Esophagus squamous epithelium (tissue), 5 donors: ENCODE measurements at regions of chr1 and their contacts with region 1.

Region 1: DNA sequence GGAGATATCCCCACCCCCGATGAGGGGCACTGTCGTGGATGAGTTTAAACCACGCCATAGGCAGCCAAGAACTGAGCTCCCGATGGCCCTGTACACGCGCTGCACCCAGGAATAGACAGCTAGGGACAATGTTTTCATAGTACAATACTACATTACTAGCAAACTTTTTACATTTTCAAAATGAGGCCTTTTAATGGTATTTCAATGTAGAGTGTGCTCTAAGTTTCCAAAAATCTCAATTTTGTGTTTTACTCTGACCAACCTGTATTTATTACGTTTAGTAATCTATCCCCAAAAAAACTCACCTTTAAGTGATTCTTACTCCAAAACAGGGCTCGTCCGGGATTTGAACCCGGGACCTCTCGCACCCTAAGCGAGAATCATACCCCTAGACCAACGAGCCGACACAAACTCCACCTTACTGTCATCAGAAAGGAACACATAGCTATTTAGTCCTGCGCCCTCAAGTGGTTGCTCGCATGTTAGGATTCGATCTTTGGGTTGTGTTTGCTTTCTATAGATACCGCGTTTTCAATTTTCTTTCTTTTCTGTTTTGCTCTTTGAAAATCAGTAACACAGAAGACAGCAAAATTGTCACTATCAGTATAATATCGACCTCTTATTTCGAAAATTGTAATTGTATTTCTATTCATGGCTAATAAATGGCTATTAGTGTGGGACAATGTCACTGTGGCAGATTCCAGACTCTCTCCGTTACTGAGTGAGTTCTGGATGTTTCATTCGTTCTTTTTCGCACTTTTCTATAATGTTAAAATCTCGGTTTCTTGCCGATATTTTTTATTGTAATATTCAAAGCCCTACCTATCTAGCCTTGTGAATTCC is 6.4 kb upstream of the MPZL1 start:
- DNase-seq: no peak
- H3K4me3 ChIP-seq: peak overlapping the region; percentile 46 to 83 (median 71)
- H3K27ac ChIP-seq: peak overlapping the region; percentile 85 to 92 (median 92)
- H3K4me1 ChIP-seq: peaks cover 0 to 36% (median 7%) of the 10 kb centered on the region in 3 donors
- H3K27me3 ChIP-seq: no peaks in the 10 kb centered on the region
- CTCF ChIP-seq: peak; percentile 72 to 95 (median 82)
- POLR2A ChIP-seq: peak in 1 of 4 donors; percentile 22

Region 2: DNA sequence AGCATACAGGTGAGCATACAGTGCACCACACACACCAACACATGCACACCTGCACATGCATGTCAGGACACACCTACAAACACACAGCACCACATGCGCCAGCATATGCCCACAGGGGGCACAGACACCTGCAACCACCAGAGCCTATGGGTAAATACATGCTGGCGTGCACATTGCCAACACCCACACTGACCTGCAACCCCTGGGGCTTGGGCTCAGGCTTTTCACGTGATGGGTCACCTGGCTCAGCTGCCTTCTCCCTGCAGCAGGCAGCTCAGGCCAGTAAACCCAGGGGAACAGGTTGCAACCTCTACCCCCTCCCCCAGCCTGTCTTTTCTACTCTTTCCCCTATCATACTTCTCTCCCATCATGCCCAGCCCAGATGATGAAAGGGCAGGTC is 205.1 kb before region 1 on chr1:
- intact Hi-C with region 1: no loop called
- DNase-seq: no peak
- H3K4me3 ChIP-seq: no peak overlapping the region
- H3K27ac ChIP-seq: no peak overlapping the region
- H3K4me1 ChIP-seq: no peaks in the 10 kb centered on the region
- H3K27me3 ChIP-seq: peaks cover 0 to 6% (median 0%) of the 10 kb centered on the region in 4 donors
- CTCF ChIP-seq: no peak
- POLR2A ChIP-seq: no peak

Region 3: DNA sequence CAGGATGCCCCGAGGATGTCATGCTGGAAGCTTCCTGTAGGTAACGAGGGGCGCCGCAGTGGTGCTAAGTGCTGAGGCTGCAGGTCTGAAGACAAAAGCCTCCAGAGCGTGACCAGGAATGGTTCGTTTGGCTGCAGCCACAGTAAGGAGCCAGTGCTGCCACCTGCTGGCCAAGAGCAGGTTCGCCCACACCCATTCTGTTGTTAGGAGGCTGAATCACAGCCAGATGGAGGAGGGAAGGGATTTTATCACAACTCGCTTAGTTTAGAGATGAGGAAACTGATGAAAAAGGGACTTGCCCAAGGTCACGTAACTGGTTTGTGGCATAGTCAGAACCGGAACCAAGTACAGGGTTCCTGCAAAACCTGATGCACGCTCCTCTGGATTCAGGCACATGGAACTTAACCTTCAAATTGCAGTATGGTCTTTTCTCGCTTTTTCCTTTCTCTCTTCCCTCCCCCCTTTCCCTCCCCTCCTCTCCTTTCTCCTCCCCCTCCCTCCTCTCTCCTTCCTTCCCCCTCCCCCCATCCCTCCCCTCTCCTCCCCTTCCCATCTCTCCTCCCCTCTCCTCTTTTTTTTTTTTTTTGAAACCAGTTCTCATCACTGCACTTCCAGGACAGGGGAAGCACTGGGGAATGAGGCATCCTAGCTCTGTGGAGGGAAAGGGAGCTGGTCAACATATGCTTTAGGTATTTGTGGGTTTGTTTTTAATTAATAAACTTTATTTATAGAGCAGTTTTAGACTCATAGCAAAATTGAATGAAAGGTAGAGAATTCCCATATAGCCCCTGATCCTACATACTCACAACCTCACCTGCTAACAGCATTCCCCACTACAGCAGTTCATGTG is 88.2 kb after region 1 on chr1:
- intact Hi-C with region 1: loop called (anchors 5 kb)
- DNase-seq: peak; percentile 75
- H3K4me3 ChIP-seq: peak overlapping the region in 1 of 4 donors; percentile 27
- H3K27ac ChIP-seq: peak overlapping the region in 1 of 4 donors; percentile 21
- H3K4me1 ChIP-seq: peaks cover 0 to 49% (median 20%) of the 10 kb centered on the region in 3 donors
- H3K27me3 ChIP-seq: no peaks in the 10 kb centered on the region
- CTCF ChIP-seq: peak; percentile 91 to 99 (median 96)
- POLR2A ChIP-seq: no peak

Region 4: DNA sequence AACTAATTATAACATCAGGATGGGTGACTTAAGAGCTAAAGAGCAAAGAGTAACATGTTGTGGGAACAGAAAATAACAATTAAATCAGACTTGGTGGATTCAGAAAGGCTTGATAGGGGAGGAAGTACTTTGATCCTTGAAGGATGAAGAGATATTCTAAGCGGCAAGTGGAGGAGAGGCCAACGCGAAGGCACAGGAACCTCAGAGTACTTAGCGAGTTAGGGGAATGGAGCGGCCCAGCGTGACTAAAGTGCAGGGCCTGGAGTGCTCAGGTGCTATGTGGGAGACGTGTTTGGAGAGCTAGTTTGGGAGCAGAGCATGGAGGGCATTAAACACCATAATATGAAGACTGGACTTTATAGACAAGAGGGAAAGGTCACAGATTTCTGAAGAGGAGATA is 134.3 kb after region 1 on chr1:
- intact Hi-C with region 1: no loop called
- DNase-seq: no peak
- H3K4me3 ChIP-seq: no peak overlapping the region
- H3K27ac ChIP-seq: no peak overlapping the region
- H3K4me1 ChIP-seq: no peaks in the 10 kb centered on the region
- H3K27me3 ChIP-seq: no peaks in the 10 kb centered on the region
- CTCF ChIP-seq: no peak
- POLR2A ChIP-seq: no peak